Caco-2 (cell line): ENCODE measurements at regions of chr16 and their contacts with region 1.

Region 1: DNA sequence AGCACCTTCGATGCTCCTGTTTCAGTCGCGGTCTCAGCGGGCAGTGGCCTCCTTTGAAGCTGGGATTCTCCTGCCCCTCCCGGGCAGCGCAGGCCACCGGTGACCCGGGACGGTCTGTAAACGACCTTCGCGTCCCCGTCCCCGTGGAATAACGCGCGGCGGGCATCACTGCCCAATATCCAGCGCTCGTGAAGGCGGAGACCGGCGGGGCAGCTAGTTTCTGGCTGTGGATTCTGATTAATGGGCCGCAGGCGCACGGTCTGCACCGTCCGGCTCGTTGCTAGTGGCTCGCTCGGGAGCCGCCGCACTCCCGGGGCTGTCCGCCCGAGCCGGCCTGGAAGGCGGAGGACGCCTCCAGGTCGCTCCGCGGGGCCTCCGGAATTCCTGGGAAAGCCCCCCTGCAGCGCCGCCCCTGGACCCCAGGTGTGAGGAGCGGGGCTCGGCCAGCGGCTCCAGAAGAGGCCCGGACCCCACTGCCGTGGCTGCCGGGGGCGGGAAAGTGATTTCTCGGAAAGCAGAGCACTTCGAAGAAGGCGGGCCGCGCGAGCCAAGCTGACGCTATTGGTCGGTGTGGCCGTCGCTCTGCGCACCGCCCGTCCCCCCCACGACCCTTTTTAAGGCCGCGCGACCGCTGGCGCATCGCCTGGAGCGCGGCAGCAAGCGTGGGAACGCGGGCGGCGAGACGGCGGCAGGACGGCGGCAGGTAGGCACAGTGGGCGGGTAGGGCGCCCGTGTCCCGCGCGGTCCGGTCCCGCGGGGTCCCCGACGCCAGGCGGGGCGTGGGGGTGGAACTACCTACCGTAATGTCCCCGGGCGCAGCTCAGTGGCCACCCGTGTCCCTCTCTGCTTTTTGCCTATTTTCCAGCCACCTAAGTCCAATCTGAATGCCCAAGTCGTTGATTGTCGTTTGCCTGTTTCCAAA is at the start of gene IRF8:
- DNase-seq: peak; percentile 85 to 91
- H3K4me3 ChIP-seq: peak within 1 kb of the TSS; percentile 78
- H3K4me3 Mint-ChIP-seq: peak within 1 kb of the TSS; percentile 84
- H3K27ac Mint-ChIP-seq: peak within 1 kb of the TSS; percentile 66
- H3K4me1 ChIP-seq: peaks cover 24% of the 10 kb centered on the region
- H3K4me1 Mint-ChIP-seq: peaks cover 36% of the 10 kb centered on the region
- H3K27me3 ChIP-seq: no peaks in the 10 kb centered on the region
- H3K27me3 Mint-ChIP-seq: no peaks in the 10 kb centered on the region
- CTCF ChIP-seq: no peak
- total RNA-seq, gene IRF8: 29.5 and 31.7 TPM in 2 replicates

Region 2: DNA sequence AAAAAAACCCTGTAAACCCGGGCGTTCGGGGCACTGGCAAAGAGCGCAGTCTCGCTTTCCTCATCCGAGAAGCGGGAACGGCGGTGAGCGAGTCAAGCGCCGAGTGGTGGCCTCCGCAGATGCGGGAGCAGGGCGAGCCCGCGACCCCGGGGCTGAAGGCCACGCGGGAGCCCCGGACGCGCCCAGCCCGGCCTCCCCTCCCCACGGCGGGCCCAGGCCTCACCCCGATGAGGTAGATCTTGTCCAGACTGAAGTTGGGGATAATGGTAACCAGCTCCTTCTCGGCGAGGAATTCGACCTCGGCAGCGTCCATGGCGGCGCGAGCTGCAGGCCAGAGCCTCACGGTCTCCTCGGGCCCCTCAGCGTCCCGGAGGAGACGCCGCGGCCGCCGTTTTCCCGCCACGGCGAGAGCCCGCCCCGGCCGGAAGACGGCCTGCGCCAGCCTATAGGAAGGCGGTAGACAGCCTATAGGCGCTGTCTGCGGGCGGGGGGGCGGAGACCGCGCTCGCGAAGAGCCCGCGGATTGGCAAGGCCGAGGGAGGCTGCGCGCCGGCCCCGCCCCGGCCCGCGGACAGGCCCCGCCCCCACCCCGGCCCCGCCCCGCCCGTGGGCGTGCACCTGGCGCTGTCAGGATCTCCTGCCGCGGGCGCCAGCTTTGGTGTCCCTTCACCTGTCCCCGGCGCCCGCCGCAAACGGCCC is 210.0 kb before region 1 on chr16 and contains the start of gene GINS2:
- CTCF ChIA-PET with region 1: no interaction called
- POLR2A ChIA-PET with region 1: no interaction called
- intact Hi-C with region 1: loop called (anchors 5 kb)
- DNase-seq: peak; percentile 97 to 98
- H3K4me3 ChIP-seq: peak within 1 kb of the TSS; percentile 96
- H3K4me3 Mint-ChIP-seq: peak within 1 kb of the TSS; percentile 79
- H3K27ac Mint-ChIP-seq: peak within 1 kb of the TSS; percentile 66
- H3K4me1 ChIP-seq: peaks cover 32% of the 10 kb centered on the region
- H3K4me1 Mint-ChIP-seq: peaks cover 15% of the 10 kb centered on the region
- H3K27me3 ChIP-seq: no peaks in the 10 kb centered on the region
- H3K27me3 Mint-ChIP-seq: no peaks in the 10 kb centered on the region
- CTCF ChIP-seq: no peak
- total RNA-seq, gene GINS2: 52.5 and 62.9 TPM in 2 replicates

Region 3: DNA sequence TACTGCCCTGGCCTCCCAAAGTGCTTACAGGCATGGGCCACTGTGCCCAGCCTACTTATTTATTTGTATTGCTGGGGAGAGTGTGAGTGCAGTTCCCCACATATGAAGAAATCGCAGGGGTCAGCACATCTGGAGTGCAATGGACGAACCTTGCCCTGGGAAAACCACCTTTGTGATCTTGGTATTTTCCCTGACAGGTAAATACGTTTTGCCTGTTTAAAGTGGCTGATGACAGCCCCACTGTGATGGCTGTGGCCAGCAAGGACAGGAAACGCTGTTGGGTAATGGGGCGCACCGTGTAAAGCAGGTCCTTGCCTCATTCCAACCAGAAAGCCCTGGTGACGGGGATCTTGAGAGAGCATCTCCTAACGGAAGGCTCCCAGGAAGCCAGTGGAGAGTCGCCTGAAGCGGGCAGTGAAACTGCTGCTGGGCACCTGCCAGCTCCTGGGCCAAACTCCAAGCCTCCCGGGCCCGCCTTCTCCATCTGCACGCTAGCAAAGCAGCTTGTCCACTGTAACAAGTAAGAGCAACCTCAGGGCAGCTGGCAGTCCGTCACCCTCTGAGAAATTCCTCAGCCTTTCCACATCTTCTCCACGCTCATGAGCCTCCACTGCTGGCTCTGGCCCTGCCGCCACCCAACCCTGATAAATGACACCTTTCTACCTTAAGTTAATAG is 116.9 kb before region 1 on chr16:
- CTCF ChIA-PET with region 1: no interaction called
- POLR2A ChIA-PET with region 1: no interaction called
- intact Hi-C with region 1: no loop called
- DNase-seq: peak in 1 of 2 experiments; percentile 32
- H3K4me3 ChIP-seq: no peak overlapping the region
- H3K4me3 Mint-ChIP-seq: no peak overlapping the region
- H3K27ac Mint-ChIP-seq: peak overlapping the region; percentile 6
- H3K4me1 ChIP-seq: 0 out of 2 replicates have a peak, but pooled peaks cover 8% of the 10 kb centered on the region
- H3K4me1 Mint-ChIP-seq: peaks cover 12% of the 10 kb centered on the region
- H3K27me3 ChIP-seq: no peaks in the 10 kb centered on the region
- H3K27me3 Mint-ChIP-seq: no peaks in the 10 kb centered on the region
- CTCF ChIP-seq: no peak

Region 4: GRCh38 chr16:85860413-85861094 is 38.2 kb before region 1 on chr16:
- CTCF ChIA-PET with region 1: no interaction called
- POLR2A ChIA-PET with region 1: no interaction called
- intact Hi-C with region 1: loop called (anchors 1 kb)
- DNase-seq: peak in 1 of 2 experiments; percentile 26
- H3K4me3 ChIP-seq: no peak overlapping the region
- H3K4me3 Mint-ChIP-seq: no peak overlapping the region
- H3K27ac Mint-ChIP-seq: peak overlapping the region; percentile 58
- H3K4me1 ChIP-seq: peaks cover 9% of the 10 kb centered on the region
- H3K4me1 Mint-ChIP-seq: peaks cover 13% of the 10 kb centered on the region
- H3K27me3 ChIP-seq: no peaks in the 10 kb centered on the region
- H3K27me3 Mint-ChIP-seq: no peaks in the 10 kb centered on the region
- CTCF ChIP-seq: no peak

Region 5: DNA sequence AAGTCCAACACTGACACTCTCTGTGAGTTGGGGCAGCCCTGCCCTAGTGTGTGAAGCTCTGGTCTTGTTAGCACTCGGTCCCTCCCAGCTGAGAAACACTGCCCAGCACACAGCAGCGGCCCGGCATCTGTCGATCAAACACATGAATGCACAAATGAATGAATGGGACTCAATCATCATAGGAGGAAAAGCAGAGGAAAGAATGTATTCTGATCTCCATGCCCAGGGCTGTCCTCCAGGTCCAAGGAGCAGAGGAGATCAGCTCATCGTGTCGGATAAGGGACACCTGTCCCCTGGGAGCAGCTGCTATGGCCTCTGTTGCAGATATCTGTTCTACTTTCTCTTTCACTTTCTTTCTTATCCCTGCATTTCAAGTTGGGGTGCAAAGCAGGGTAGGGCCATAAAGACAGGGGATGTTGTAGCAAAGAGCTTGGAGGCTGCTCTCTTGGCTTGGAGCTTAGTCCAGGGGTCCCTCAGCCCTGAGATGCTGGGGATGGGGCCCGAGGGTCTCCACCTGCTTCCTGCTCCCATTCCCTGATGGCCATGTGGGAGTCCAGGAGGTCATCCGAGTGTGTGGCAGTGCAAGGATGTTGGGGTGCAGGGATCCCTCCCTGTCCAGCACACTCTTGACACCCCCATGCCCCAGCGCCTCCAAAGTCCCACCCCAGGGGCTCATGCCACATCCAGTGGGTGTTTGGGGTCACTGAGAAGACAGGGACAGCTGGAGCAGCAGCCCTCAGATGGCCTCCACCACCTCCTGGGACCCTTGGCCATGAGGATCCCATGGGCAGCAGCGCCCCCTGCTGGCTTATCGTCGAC is 88.4 kb after region 1 on chr16:
- CTCF ChIA-PET with region 1: interaction called, 3 read pairs
- POLR2A ChIA-PET with region 1: interaction called, 4 read pairs
- intact Hi-C with region 1: loop called (anchors 2 kb)
- DNase-seq: peak; percentile 52 to 56
- H3K4me3 ChIP-seq: no peak overlapping the region
- H3K4me3 Mint-ChIP-seq: no peak overlapping the region
- H3K27ac Mint-ChIP-seq: no peak overlapping the region
- H3K4me1 ChIP-seq: peaks cover 29% of the 10 kb centered on the region
- H3K4me1 Mint-ChIP-seq: peaks cover 24% of the 10 kb centered on the region
- H3K27me3 ChIP-seq: no peaks in the 10 kb centered on the region
- H3K27me3 Mint-ChIP-seq: no peaks in the 10 kb centered on the region
- CTCF ChIP-seq: peak; percentile 47 to 87

Region 6: DNA sequence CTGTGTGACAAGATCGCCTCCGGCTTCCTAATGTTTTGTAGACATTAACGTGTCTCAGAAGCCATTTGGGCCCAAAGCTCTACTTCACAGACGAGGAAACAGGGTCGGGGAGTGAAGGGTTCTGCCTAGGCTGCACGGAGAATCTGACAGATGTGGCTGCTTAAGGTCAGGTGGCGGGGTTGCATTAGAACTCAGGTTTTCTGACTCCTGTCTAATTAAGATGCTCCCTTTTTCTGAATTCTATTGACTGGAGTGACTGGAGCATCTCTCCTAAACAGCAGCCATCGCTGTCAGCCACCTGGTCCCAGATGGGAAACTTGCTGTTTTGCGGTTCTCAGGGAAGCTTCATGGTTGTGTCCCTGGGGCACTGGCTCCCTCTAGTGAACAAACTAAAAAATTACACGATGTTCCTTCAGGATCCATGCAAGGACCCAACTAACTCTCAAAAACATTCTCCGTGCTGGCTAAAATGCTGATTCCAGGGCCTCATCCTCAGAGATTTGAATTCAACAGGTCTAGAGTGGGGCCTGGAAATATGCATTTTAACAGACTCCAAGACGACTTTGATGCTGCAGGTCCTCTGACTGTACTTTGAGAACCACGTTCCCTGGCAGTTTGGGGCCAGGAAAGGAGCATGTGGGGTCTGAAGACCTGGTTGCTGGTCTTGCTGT is 117.6 kb after region 1 on chr16:
- CTCF ChIA-PET with region 1: interaction called, 8 read pairs
- POLR2A ChIA-PET with region 1: interaction called, 4 read pairs
- intact Hi-C with region 1: loop called (anchors 1 kb)
- DNase-seq: peak; percentile 57 to 73
- H3K4me3 ChIP-seq: no peak overlapping the region
- H3K4me3 Mint-ChIP-seq: no peak overlapping the region
- H3K27ac Mint-ChIP-seq: no peak overlapping the region
- H3K4me1 ChIP-seq: no peaks in the 10 kb centered on the region
- H3K4me1 Mint-ChIP-seq: no peaks in the 10 kb centered on the region
- H3K27me3 ChIP-seq: no peaks in the 10 kb centered on the region
- H3K27me3 Mint-ChIP-seq: peaks cover 7% of the 10 kb centered on the region
- CTCF ChIP-seq: peak; percentile 81 to 86